ENCODE measurements at regions of chr6 and their contacts with region 1.

Region 1: DNA sequence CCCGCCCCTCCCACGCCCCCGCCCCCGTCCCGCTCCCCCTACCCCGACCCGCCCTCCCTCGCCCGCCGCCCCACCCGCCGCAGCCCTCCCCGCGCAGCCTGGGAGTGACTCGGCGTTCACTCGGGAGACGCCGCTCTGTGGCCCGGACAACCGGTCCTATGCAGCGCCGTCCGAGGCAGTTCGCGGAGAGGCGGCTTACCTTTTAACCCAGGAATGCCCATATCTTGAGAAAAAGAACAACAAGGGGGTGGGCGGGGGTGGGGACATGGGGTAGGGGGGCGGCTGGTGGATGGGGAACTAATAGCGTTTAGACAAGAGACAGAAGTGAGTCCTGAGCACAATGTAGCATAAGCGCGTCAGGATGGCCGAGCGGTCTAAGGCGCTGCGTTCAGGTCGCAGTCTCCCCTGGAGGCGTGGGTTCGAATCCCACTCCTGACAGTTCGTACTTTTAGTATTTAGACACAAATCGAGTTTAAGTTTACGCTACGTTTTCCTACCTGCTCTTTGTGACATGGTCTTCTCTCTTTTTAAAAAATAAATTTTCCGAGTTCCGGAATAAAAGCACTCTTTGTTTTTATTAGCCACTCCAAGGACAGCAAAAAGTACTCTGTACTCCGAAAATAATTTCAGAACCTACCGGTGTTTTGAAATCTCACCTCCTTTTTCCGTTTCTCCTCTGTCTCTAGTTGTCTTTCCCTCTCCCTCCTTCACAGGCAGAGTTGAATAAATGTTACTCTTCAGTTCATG is 17.1 kb upstream of the HMGN4 start:
- DNase-seq: peak; percentile 69 to 94 (median 86)
- ATAC-seq: peak; percentile 80
- H3K4me3 ChIP-seq: peak overlapping the region; percentile 50 to 57
- H3K4me3 Mint-ChIP-seq: peak overlapping the region; percentile 83
- H3K27ac ChIP-seq: peak overlapping the region; percentile 35 to 86
- H3K27ac Mint-ChIP-seq: peak overlapping the region; percentile 83
- H3K4me1 ChIP-seq: peaks cover 8% of the 10 kb centered on the region
- H3K4me1 Mint-ChIP-seq: peaks cover 31% of the 10 kb centered on the region
- H3K27me3 ChIP-seq: no peaks in the 10 kb centered on the region
- H3K27me3 Mint-ChIP-seq: no peaks in the 10 kb centered on the region
- CTCF ChIP-seq: no peak

Region 2: GRCh38 chr6:26401987-26402658 is 118.9 kb before region 1 on chr6 and contains the start of gene BTN3A1:
- CTCF ChIA-PET with region 1: no interaction called
- POLR2A ChIA-PET with region 1: interaction called, 3 read pairs
- intact Hi-C with region 1: loop called (anchors 1 kb)
- DNase-seq: peak; percentile 22 to 90 (median 65)
- ATAC-seq: peak; percentile 88
- H3K4me3 ChIP-seq: peak within 1 kb of the TSS; percentile 82 to 91
- H3K4me3 Mint-ChIP-seq: peak within 1 kb of the TSS; percentile 92
- H3K27ac ChIP-seq: peak within 1 kb of the TSS; percentile 92 to 97
- H3K27ac Mint-ChIP-seq: peak within 1 kb of the TSS; percentile 99
- H3K4me1 ChIP-seq: peaks cover 42% of the 10 kb centered on the region
- H3K4me1 Mint-ChIP-seq: peaks cover 50% of the 10 kb centered on the region
- H3K27me3 ChIP-seq: no peaks in the 10 kb centered on the region
- H3K27me3 Mint-ChIP-seq: no peaks in the 10 kb centered on the region
- CTCF ChIP-seq: no peak
- total RNA-seq, gene BTN3A1: 97.0 to 104 TPM

Region 3: GRCh38 chr6:26457806-26458688 is 63.0 kb before region 1 on chr6 and contains the start of gene BTN2A1:
- CTCF ChIA-PET with region 1: no interaction called
- POLR2A ChIA-PET with region 1: no interaction called
- intact Hi-C with region 1: loop called in 1 of 2 experiments (anchors 5 kb)
- DNase-seq: peak; percentile 33 to 93 (median 65)
- ATAC-seq: peak; percentile 96
- H3K4me3 ChIP-seq: peak within 1 kb of the TSS; percentile 64 to 78
- H3K4me3 Mint-ChIP-seq: peak within 1 kb of the TSS; percentile 100
- H3K27ac ChIP-seq: peak within 1 kb of the TSS; percentile 61 to 92
- H3K27ac Mint-ChIP-seq: peak within 1 kb of the TSS; percentile 99
- H3K4me1 ChIP-seq: peaks cover 48% of the 10 kb centered on the region
- H3K4me1 Mint-ChIP-seq: peaks cover 68% of the 10 kb centered on the region
- H3K27me3 ChIP-seq: no peaks in the 10 kb centered on the region
- H3K27me3 Mint-ChIP-seq: no peaks in the 10 kb centered on the region
- CTCF ChIP-seq: no peak
- total RNA-seq, gene BTN2A1: 16.4 to 17.3 TPM

Region 4: DNA sequence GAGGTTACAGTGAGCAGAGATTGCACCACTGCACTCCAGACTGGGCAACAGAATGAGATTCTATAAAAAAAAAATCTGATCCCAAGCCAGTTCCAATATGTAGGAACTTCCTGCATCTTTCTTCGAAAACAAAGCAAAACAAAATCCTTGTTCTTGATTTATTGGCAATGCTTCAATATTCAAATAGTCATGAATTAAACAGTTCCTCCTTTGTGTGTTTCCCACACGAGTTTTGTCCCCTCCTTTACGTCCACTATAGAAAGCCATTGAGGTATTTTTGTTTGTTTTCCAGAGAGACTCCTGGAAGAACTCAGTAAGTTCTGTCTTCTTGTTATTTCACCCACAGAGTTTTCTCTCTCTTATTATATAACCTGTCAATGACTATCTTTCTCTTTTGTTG is 13.4 kb before region 1 on chr6:
- CTCF ChIA-PET with region 1: no interaction called
- POLR2A ChIA-PET with region 1: no interaction called
- intact Hi-C with region 1: no loop called
- DNase-seq: no peak
- ATAC-seq: no peak
- H3K4me3 ChIP-seq: no peak overlapping the region
- H3K4me3 Mint-ChIP-seq: no peak overlapping the region
- H3K27ac ChIP-seq: no peak overlapping the region
- H3K27ac Mint-ChIP-seq: no peak overlapping the region
- H3K4me1 ChIP-seq: no peaks in the 10 kb centered on the region
- H3K4me1 Mint-ChIP-seq: no peaks in the 10 kb centered on the region
- H3K27me3 ChIP-seq: peaks cover 4 to 6% of the 10 kb centered on the region in 2 experiments
- H3K27me3 Mint-ChIP-seq: peaks cover 14% of the 10 kb centered on the region
- CTCF ChIP-seq: no peak

Region 5: DNA sequence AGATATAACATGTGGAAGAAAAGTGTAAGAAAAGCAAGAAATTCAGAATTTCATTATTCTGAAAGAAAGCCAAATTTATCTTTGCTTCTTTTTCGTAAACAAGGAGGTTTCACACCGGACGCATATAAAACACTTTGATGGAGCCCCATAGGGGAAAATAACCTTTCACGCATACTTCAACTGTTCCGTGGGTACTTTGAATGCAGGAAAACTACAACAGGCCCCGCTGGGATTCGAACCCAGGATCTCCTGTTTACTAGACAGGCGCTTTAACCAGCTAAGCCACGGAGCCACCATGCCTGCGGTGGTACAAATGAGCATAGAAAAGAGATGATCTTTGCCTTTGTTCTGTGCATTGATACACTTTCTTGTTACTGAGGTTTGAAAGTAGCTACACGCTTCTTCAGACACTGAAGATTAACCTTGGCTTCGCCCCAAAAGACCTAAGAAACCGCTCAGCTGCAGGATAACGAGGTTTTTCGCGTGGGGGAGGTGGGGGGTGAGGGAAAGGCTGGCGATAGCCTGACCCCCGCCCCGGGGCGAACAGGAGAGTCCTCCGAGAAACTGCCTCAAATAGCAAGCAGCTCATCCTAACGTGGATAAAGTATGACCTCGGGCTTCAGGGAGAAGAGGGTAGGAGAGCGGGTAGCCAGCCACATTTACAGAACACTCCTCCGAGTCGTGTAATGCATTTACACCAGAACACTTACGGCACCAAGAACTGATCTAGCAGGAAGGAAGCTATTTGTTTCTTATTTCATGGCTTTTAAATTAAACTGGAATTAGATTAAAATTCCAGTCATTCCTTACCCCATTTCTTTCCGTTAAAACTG is 11.9 kb after region 1 on chr6:
- CTCF ChIA-PET with region 1: interaction called, 8 read pairs
- POLR2A ChIA-PET with region 1: interaction called, 39 read pairs
- intact Hi-C with region 1: loop called (anchors 1 kb)
- DNase-seq: peak; percentile 82 to 97 (median 91)
- ATAC-seq: peak; percentile 35
- H3K4me3 ChIP-seq: peak overlapping the region; percentile 69 to 80
- H3K4me3 Mint-ChIP-seq: peak overlapping the region; percentile 100
- H3K27ac ChIP-seq: peak overlapping the region; percentile 53 to 57
- H3K27ac Mint-ChIP-seq: peak overlapping the region; percentile 97
- H3K4me1 ChIP-seq: peaks cover 25% of the 10 kb centered on the region
- H3K4me1 Mint-ChIP-seq: peaks cover 52% of the 10 kb centered on the region
- H3K27me3 ChIP-seq: no peaks in the 10 kb centered on the region
- H3K27me3 Mint-ChIP-seq: peaks cover 2% of the 10 kb centered on the region
- CTCF ChIP-seq: no peak

Region 6: GRCh38 chr6:26537846-26538571 is 17.0 kb after region 1 on chr6 and contains the start of gene HMGN4:
- CTCF ChIA-PET with region 1: interaction called, 8 read pairs
- POLR2A ChIA-PET with region 1: interaction called, 39 read pairs
- intact Hi-C with region 1: loop called (anchors 1 kb)
- DNase-seq: peak; percentile 65 to 96 (median 79)
- ATAC-seq: peak; percentile 69
- H3K4me3 ChIP-seq: peak within 1 kb of the TSS; percentile 66 to 99
- H3K4me3 Mint-ChIP-seq: peak within 1 kb of the TSS; percentile 89
- H3K27ac ChIP-seq: peak within 1 kb of the TSS; percentile 88 to 93
- H3K27ac Mint-ChIP-seq: peak within 1 kb of the TSS; percentile 92
- H3K4me1 ChIP-seq: peaks cover 32% of the 10 kb centered on the region
- H3K4me1 Mint-ChIP-seq: peaks cover 58% of the 10 kb centered on the region
- H3K27me3 ChIP-seq: no peaks in the 10 kb centered on the region
- H3K27me3 Mint-ChIP-seq: no peaks in the 10 kb centered on the region
- CTCF ChIP-seq: no peak
- total RNA-seq, gene HMGN4: 24.8 to 33.7 TPM

Measured in CD8-positive, alpha-beta T cell (primary cell).